Naive thymus-derived CD4-positive, alpha-beta T cell (primary cell): ENCODE measurements at regions of chr1 and their contacts with region 1.

Region 1: DNA sequence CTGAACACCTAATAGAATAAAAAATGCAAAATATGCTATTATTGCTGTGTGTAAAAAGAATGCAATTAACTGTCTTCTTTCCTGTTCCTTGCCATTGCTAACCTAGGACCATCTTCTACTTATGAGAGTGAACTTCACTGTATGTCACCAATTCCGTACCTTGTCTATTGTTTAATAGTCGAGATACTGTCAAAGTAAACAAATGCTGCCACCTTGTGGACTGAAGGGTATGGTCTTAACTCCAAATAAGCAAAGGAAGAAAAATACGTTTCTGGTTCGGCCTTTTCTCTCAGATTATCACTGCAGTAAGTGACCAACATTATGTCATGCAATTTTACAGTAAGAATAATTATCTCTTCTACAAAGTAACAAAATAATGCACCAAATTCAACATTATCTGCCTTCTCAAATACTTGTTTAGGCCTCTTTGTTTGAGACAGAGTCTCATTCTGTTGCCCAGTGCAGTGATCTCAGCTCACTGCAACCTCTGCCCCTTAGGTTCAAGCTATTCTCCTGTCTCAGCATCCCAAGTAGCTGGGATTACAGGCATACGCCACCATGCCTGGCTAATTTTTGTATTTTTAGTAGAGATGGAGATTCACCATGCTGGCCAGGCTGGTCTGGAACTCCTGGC is 133.4 kb downstream of the COP1 start:
- DNase-seq: peak in 7 of 9 donors; percentile 1 to 31 (median 25)
- ATAC-seq: peak; percentile 63
- H3K4me3 ChIP-seq: no peak overlapping the region
- H3K4me3 Mint-ChIP-seq: no peak overlapping the region
- H3K27ac ChIP-seq: no peak overlapping the region
- H3K27ac Mint-ChIP-seq: no peak overlapping the region
- H3K4me1 ChIP-seq: no peaks in the 10 kb centered on the region
- H3K4me1 Mint-ChIP-seq: peaks cover 2 to 28% (median 12%) of the 10 kb centered on the region in 7 donors
- H3K27me3 ChIP-seq: no peaks in the 10 kb centered on the region
- H3K27me3 Mint-ChIP-seq: no peaks in the 10 kb centered on the region

Region 2: DNA sequence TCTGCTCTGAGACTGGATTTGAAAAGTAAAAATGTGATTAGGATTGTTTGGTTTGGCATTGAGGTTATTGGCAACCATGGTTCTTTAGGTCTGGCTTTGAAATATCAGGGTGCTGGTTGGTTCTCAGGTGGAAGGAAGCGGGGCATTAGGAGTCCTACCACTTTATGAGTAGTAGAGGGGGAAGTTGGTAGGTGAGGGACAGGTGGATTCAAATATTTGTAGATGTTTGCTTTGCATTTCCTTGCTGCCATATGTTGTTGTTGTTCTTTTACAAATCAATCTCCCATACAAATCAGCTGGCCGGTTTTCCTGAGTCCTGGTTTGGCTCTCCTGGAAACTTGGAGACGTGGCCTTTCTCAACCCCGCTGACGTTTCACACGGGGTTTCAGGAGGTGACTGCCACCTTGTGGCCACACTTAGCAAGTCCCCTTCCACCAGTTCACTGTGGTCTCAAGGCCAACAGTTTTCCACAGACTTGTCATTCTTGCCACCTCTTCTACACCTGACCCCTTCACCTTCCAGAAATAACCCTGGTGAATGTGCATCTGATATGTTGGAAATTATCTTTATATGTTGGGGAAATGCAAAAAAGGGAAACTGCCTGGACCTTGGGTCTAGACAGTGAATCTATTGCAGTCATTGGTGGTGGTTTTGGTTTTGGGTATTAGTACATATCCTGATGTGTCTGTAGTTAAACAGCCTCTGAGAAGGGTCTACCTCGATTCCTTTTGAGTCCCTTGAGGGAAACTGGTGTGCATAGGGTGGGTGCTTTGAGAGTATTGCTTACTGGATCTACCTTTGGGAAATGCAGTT is 754.0 kb before region 1 on chr1:
- CTCF ChIA-PET with region 1: no interaction called
- POLR2A ChIA-PET with region 1: no interaction called
- intact Hi-C with region 1: loop called in 1 of 2 experiments (anchors 1 kb)
- DNase-seq: peak; percentile 45 to 71 (median 62)
- ATAC-seq: peak; percentile 91
- H3K4me3 ChIP-seq: no peak overlapping the region
- H3K4me3 Mint-ChIP-seq: peak overlapping the region in 5 of 10 donors; percentile 8 to 44 (median 42)
- H3K27ac ChIP-seq: no peak overlapping the region
- H3K27ac Mint-ChIP-seq: no peak overlapping the region
- H3K4me1 ChIP-seq: peaks cover 4 to 5% of the 10 kb centered on the region in 2 donors
- H3K4me1 Mint-ChIP-seq: peaks cover 4 to 29% (median 18%) of the 10 kb centered on the region in 7 donors
- H3K27me3 ChIP-seq: no peaks in the 10 kb centered on the region
- H3K27me3 Mint-ChIP-seq: peaks cover 0 to 29% (median 5%) of the 10 kb centered on the region in 5 donors

Region 3: DNA sequence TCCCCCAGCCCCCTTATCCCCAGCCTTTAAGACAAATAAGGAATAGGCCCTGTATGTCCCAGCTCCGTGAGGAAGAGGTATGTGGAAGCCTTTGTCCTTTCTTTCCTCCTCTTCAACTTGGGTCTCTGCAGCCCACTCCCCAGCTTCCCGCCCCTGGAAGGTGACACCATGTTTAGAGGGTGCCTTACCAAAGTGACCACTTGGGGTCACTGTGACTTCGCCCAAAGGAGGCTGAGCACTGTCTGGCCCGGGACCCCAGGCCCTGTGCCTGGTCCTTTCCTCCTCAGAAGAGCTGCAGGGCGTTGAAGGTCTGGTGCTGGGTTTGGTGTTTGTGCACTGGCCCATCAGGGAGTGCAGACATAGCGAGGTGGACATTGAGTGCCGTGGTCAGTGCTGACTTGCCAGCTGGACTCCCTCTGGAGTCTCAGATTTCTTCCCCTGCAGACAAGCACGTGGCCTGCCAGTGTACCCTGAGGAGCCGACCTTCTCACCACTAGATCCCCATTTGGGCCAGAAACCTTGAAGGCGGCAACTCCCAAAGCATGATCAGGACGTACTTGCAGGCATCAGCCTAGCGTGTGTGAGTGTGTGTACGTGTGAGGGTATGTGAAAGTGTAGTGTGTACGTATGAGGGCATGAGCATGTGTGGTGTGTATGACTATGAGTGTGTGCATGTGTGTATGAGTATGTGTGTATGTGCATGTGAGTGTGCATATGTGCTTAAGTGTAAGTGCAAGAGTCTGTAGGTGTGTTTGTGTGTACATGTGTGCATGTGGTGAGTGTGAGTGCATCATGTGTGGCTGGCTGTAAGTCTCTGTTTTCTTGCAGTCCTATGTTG is 699.6 kb before region 1 on chr1:
- CTCF ChIA-PET with region 1: no interaction called
- POLR2A ChIA-PET with region 1: no interaction called
- intact Hi-C with region 1: loop called in 1 of 2 experiments (anchors 5 kb)
- DNase-seq: peak in 1 of 9 donors; percentile 23
- ATAC-seq: no peak
- H3K4me3 ChIP-seq: no peak overlapping the region
- H3K4me3 Mint-ChIP-seq: no peak overlapping the region
- H3K27ac ChIP-seq: no peak overlapping the region
- H3K27ac Mint-ChIP-seq: peak overlapping the region in 1 of 9 donors; percentile 1
- H3K4me1 ChIP-seq: no peaks in the 10 kb centered on the region
- H3K4me1 Mint-ChIP-seq: no peaks in the 10 kb centered on the region
- H3K27me3 ChIP-seq: no peaks in the 10 kb centered on the region
- H3K27me3 Mint-ChIP-seq: peaks cover 0 to 14% (median 11%) of the 10 kb centered on the region in 5 donors

Region 4: GRCh38 chr1:175481126-175482066 is 592.2 kb before region 1 on chr1:
- CTCF ChIA-PET with region 1: no interaction called
- POLR2A ChIA-PET with region 1: no interaction called
- intact Hi-C with region 1: loop called in 1 of 2 experiments (anchors 2 kb)
- DNase-seq: no peak
- ATAC-seq: no peak
- H3K4me3 ChIP-seq: no peak overlapping the region
- H3K4me3 Mint-ChIP-seq: no peak overlapping the region
- H3K27ac ChIP-seq: no peak overlapping the region
- H3K27ac Mint-ChIP-seq: no peak overlapping the region
- H3K4me1 ChIP-seq: no peaks in the 10 kb centered on the region
- H3K4me1 Mint-ChIP-seq: no peaks in the 10 kb centered on the region
- H3K27me3 ChIP-seq: no peaks in the 10 kb centered on the region
- H3K27me3 Mint-ChIP-seq: peaks cover 10 to 30% (median 22%) of the 10 kb centered on the region in 5 donors

Region 5: DNA sequence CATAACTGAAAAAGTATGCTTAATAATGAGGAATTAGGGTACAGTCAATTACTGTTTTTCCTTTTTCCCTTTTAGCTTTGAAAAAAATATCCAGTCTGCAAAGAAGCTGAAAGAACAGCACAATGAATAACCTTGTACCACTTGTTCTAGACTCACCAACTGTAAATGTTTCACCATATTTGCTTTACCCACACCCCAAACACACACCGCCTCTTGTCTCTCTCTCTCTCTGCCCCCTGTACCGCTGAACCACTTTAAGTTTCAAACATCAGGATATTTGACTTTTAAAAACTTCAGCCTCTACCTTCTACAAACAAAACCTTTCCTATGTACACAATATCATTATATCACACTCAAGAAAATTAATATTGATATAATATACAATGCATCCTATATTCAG is 63.7 kb before region 1 on chr1:
- CTCF ChIA-PET with region 1: no interaction called
- POLR2A ChIA-PET with region 1: no interaction called
- intact Hi-C with region 1: no loop called
- DNase-seq: no peak
- ATAC-seq: no peak
- H3K4me3 ChIP-seq: no peak overlapping the region
- H3K4me3 Mint-ChIP-seq: peak overlapping the region in 1 of 10 donors; percentile 14
- H3K27ac ChIP-seq: no peak overlapping the region
- H3K27ac Mint-ChIP-seq: no peak overlapping the region
- H3K4me1 ChIP-seq: no peaks in the 10 kb centered on the region
- H3K4me1 Mint-ChIP-seq: peaks cover 0 to 3% (median 0%) of the 10 kb centered on the region in 7 donors
- H3K27me3 ChIP-seq: no peaks in the 10 kb centered on the region
- H3K27me3 Mint-ChIP-seq: no peaks in the 10 kb centered on the region

Region 6: DNA sequence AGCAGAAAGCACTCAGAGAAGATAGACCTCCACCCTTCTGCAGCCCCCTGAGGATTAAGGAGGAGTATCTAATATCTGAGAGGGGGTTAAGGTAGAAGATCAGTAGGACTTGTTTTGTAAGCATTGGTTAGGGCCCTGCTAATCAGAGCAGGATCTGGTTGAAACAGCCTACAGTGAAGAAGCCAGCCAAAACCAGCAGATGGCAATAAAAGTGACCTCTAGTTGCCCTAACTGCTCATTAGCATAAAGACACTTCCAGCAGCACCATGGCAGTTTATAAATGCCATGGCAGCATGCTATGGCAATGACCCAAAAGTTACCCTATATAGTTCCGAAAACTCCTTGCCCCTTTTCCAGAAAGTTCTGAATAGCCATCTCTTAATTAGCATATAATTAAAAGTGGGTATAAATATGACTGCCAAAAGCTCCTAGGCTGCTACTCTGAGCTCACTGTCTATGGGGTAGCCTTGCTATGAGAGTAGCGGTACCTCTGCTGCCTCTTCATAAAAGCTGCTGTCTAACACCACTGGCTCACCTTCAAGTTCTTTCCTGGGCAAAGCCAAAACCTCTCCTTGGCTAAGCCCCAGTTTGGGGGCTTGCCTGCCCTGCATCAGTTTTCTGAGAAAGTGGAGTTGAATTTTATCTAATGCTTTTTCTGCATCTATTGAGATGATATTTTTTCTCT is 643.6 kb after region 1 on chr1:
- CTCF ChIA-PET with region 1: no interaction called
- POLR2A ChIA-PET with region 1: no interaction called
- intact Hi-C with region 1: no loop called
- DNase-seq: no peak
- ATAC-seq: no peak
- H3K4me3 ChIP-seq: no peak overlapping the region
- H3K4me3 Mint-ChIP-seq: no peak overlapping the region
- H3K27ac ChIP-seq: no peak overlapping the region
- H3K27ac Mint-ChIP-seq: no peak overlapping the region
- H3K4me1 ChIP-seq: no peaks in the 10 kb centered on the region
- H3K4me1 Mint-ChIP-seq: no peaks in the 10 kb centered on the region
- H3K27me3 ChIP-seq: no peaks in the 10 kb centered on the region
- H3K27me3 Mint-ChIP-seq: no peaks in the 10 kb centered on the region